CD8-positive, alpha-beta T cell (primary cell): ENCODE measurements at regions of chr1 and their contacts with region 1.

Region 1: GRCh38 chr1:246699095-246699735 is 25.0 kb upstream of the SCCPDH start:
- DNase-seq: peak; percentile 53 to 90 (median 76)
- ATAC-seq: peak; percentile 89
- H3K4me3 ChIP-seq: peak overlapping the region; percentile 11 to 38
- H3K4me3 Mint-ChIP-seq: peak overlapping the region; percentile 76
- H3K27ac ChIP-seq: peak overlapping the region in 1 of 2 experiments; percentile 43
- H3K27ac Mint-ChIP-seq: no peak overlapping the region
- H3K4me1 ChIP-seq: peaks cover 2% of the 10 kb centered on the region
- H3K4me1 Mint-ChIP-seq: peaks cover 4% of the 10 kb centered on the region
- H3K27me3 ChIP-seq: no peaks in the 10 kb centered on the region
- H3K27me3 Mint-ChIP-seq: peaks cover 2% of the 10 kb centered on the region
- CTCF ChIP-seq: peak; percentile 66

Region 2: GRCh38 chr1:246724016-246724730 is 25.0 kb after region 1 on chr1 and contains the start of gene SCCPDH:
- CTCF ChIA-PET with region 1: no interaction called
- POLR2A ChIA-PET with region 1: no interaction called
- intact Hi-C with region 1: loop called in 1 of 2 experiments (anchors 2 kb)
- DNase-seq: peak; percentile 39 to 83 (median 70)
- ATAC-seq: peak; percentile 95
- H3K4me3 ChIP-seq: peak within 1 kb of the TSS; percentile 69 to 79
- H3K4me3 Mint-ChIP-seq: peak within 1 kb of the TSS; percentile 93
- H3K27ac ChIP-seq: peak within 1 kb of the TSS in 1 of 2 experiments; percentile 58
- H3K27ac Mint-ChIP-seq: peak within 1 kb of the TSS; percentile 90
- H3K4me1 ChIP-seq: no peaks in the 10 kb centered on the region
- H3K4me1 Mint-ChIP-seq: peaks cover 16% of the 10 kb centered on the region
- H3K27me3 ChIP-seq: no peaks in the 10 kb centered on the region
- H3K27me3 Mint-ChIP-seq: no peaks in the 10 kb centered on the region
- CTCF ChIP-seq: no peak
- total RNA-seq, gene SCCPDH: 5.4 to 6.0 TPM